RWPE1 (cell line): ENCODE measurements at regions of chr20 and their contacts with region 1.

Region 1: GRCh38 chr20:38337561-38338140 is 8.6 kb upstream of the LBP start:
- DNase-seq: peak; percentile 63
- H3K27ac ChIP-seq: no peak overlapping the region
- CTCF ChIP-seq: no peak; the same call in 1 of the 2 replicates

Region 2: GRCh38 chr20:38267296-38267695 is 70.4 kb before region 1 on chr20:
- CTCF ChIA-PET with region 1: no interaction called
- POLR2A ChIA-PET with region 1: no interaction called
- DNase-seq: no peak
- H3K27ac ChIP-seq: no peak overlapping the region
- CTCF ChIP-seq: no peak

Region 3: GRCh38 chr20:38350800-38351775 is 13.4 kb after region 1 on chr20:
- CTCF ChIA-PET with region 1: interaction called, 13 read pairs
- POLR2A ChIA-PET with region 1: no interaction called
- DNase-seq: no peak
- H3K27ac ChIP-seq: no peak overlapping the region
- CTCF ChIP-seq: no peak

Region 4: DNA sequence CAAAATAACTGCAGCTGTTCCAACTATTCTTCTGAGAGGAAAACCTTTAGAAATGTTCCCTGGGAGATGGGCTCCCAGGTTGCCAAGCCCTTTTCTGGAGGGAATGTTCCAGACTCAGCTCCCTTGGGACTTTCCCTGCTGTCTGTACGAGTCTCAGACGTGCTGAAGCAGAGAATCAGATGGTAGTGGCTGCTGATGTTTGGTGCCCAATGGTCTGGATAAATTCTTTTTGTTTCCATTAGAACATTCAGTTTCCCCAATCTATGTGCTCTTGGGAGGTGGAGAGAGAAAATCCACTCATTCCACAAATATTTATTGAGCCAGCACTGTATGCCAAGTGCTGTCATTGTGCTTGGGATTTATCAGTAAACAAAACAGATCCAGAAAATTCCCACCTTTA is 57.5 kb after region 1 on chr20:
- CTCF ChIA-PET with region 1: interaction called, 12 read pairs
- POLR2A ChIA-PET with region 1: no interaction called
- DNase-seq: no peak
- H3K27ac ChIP-seq: no peak overlapping the region
- CTCF ChIP-seq: no peak

Region 5: DNA sequence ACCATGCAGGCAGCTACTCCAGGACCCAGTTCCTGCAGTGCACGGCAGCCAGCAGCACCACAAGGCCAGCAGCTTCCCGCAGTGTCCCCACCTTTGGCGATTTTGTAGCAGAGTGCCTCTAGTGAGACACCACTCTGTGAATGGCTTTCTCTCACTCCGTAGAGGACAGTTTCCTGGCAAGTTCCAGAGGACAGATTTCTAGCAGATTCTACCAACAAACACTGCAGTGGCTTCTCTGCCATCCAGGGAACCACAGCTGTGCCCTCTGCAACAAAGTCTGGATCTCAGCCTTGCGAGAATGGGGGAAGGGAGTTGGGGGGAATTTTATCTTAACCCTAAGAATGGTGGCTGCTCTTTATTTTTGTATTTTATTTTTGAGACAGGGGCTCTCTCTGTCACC is 68.8 kb after region 1 on chr20:
- CTCF ChIA-PET with region 1: interaction called, 73 read pairs
- POLR2A ChIA-PET with region 1: no interaction called
- DNase-seq: no peak
- H3K27ac ChIP-seq: no peak overlapping the region
- CTCF ChIP-seq: no peak

Region 6: DNA sequence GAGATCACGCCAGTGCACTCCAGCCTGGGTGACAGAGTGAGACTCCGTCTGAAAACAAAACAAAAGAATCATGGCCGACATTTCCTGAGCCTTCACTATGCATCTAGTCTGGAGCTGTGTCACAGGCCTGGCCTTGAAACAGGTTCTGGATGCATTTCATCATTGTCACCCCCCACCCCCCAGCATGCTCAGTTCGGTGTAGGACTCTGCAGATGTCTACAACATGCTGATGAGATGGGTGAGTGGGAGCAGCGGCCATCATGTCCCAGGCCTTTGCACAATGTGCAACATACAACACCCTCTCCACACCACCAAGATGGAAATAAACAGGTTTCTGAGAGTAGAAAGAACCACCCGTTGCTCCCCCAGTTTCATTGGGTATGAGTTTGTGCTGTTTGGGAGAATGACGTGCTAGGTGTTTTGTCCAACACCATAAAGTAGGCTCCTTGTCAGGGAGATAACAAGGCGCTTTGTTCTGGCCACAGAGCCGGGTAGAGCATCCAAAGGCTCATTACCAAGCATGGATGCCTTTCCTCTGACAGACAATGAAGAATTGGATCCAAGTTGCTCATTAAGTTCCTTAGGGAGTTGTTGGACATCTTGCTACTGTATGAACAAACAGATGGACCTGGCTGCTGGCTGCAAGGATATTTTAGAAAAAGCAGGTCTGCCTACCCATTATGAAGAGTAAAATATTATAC is 75.4 kb after region 1 on chr20:
- CTCF ChIA-PET with region 1: interaction called, 73 read pairs
- POLR2A ChIA-PET with region 1: no interaction called
- DNase-seq: no peak
- H3K27ac ChIP-seq: 0 out of 2 replicates have a peak overlapping the region, but pooled peaks have one; percentile 1
- CTCF ChIP-seq: no peak